Lower lobe of right lung (tissue), 2 donors: ENCODE measurements at regions of chr3 and their contacts with region 1.

Region 1: GRCh38 chr3:113906568-113907140 is 41.2 kb upstream of the ZDHHC23 start:
- DNase-seq: no peak
- ATAC-seq: no peak
- H3K4me3 ChIP-seq: no peak overlapping the region
- H3K27ac ChIP-seq: no peak overlapping the region
- H3K4me1 ChIP-seq: no peaks in the 10 kb centered on the region
- H3K27me3 ChIP-seq: no peaks in the 10 kb centered on the region
- CTCF ChIP-seq: no peak

Region 2: DNA sequence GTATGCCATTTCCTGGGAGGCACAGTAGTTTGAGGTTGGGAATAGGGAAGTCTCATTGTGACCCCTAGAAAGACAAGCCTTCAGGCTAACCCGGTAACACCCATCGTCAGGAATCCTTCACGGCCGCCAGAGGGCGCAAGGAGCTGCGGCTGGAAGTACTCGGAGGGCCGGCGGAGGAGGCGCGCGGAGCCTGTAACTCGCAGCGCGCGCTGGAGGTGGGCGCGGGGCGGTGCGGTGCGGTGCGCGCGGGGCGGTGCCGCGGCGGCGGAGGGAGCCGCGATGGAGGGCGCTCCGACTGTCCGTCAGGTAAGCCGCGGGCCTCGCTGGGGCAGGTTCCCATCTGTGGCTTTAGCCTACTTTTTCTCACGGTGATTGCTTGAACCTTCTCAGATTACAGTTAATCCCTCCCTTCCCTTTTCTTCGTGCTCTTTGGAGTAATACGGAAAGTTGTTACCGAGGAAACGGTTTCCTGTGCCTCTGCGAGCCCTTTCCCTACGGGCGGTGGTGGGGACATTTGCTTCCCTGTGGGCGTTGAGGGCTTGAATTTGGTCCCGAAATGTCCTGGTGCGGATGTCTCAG is 67.9 kb before region 1 on chr3 and contains the start of gene GRAMD1C:
- intact Hi-C with region 1: loop called (anchors 10 kb)
- DNase-seq: peak; percentile 93
- ATAC-seq: peak; percentile 98 to 99
- H3K4me3 ChIP-seq: peak within 1 kb of the TSS; percentile 64
- H3K27ac ChIP-seq: peak within 1 kb of the TSS; percentile 15
- H3K4me1 ChIP-seq: peaks cover 8% of the 10 kb centered on the region
- H3K27me3 ChIP-seq: no peaks in the 10 kb centered on the region
- CTCF ChIP-seq: peak; percentile 84
- total RNA-seq, gene GRAMD1C: 9.2 TPM